ENCODE measurements at regions of chr10 and their contacts with region 1.

Region 1: DNA sequence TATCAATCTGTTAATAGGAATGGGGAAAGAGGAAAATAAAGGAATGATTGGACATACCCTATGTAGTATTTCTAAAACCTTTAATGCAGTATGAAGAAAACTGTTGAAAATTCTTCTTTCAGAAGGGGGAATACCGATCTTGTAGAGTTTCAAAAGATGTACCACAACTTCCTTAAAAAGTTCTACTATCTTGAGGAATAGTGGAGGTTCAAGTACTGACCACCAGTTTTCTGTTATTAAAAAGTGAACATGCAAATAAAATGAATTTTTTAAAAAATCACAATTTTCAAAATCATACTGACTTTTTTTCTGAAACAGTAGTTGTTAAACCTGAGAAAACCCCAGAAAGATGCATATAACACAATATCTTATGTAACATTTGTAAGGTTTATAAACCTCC is 86.5 kb downstream of the HERC4 start:
- DNase-seq: no peak
- ATAC-seq: no peak
- H3K4me3 ChIP-seq: no peak overlapping the region
- H3K4me3 Mint-ChIP-seq: no peak overlapping the region
- H3K27ac ChIP-seq: no peak overlapping the region
- H3K27ac Mint-ChIP-seq: peak overlapping the region in 2 of 9 donors; percentile 13 to 73
- H3K4me1 ChIP-seq: no peaks in the 10 kb centered on the region
- H3K4me1 Mint-ChIP-seq: peaks cover 2 to 15% (median 12%) of the 10 kb centered on the region in 7 donors
- H3K27me3 ChIP-seq: no peaks in the 10 kb centered on the region
- H3K27me3 Mint-ChIP-seq: no peaks in the 10 kb centered on the region

Region 2: DNA sequence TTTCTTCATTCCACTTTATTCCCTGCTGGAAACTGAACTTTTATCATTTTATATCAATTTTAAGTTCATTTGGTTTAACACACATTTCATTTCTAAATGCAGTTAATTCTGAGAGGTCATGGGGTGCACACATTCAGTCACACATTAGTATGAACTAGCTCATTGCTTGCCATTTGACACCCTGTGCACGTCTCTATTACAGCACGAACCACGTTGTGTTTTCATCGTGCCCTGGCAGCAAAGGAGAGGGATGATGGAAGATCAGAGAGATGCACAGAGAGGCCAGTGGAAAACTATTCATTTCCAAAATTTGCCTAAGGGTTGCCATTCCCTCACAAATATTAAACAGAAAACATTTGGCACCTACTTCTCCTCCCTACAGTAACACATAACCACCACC is 338.0 kb before region 1 on chr10:
- CTCF ChIA-PET with region 1: no interaction called
- POLR2A ChIA-PET with region 1: no interaction called
- intact Hi-C with region 1: no loop called
- DNase-seq: no peak
- ATAC-seq: no peak
- H3K4me3 ChIP-seq: no peak overlapping the region
- H3K4me3 Mint-ChIP-seq: no peak overlapping the region
- H3K27ac ChIP-seq: no peak overlapping the region
- H3K27ac Mint-ChIP-seq: no peak overlapping the region
- H3K4me1 ChIP-seq: no peaks in the 10 kb centered on the region
- H3K4me1 Mint-ChIP-seq: no peaks in the 10 kb centered on the region
- H3K27me3 ChIP-seq: no peaks in the 10 kb centered on the region
- H3K27me3 Mint-ChIP-seq: peaks cover 0 to 19% (median 5%) of the 10 kb centered on the region in 5 donors

Region 3: DNA sequence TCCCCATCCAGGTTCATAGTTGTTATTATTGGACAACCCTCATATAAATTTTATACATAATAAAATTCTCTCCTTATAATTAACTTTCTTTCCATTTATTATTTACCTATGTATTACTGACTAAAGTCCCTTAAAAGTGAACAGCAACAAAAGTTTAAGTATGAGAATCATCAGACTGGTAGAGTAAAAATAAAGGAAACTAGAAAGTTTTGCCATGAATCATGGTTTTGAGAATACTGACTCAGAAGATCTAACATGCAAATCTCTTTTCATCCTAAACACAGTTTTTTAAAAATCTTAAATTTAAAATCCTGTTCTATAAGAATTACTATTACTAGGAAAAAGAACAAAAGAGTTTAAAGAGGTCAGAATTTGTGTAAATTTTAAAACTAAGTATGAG is 54.4 kb after region 1 on chr10:
- CTCF ChIA-PET with region 1: no interaction called
- POLR2A ChIA-PET with region 1: no interaction called
- intact Hi-C with region 1: loop called in 1 of 2 experiments (anchors 5 kb)
- DNase-seq: no peak
- ATAC-seq: no peak
- H3K4me3 ChIP-seq: no peak overlapping the region
- H3K4me3 Mint-ChIP-seq: no peak overlapping the region
- H3K27ac ChIP-seq: no peak overlapping the region
- H3K27ac Mint-ChIP-seq: no peak overlapping the region
- H3K4me1 ChIP-seq: no peaks in the 10 kb centered on the region
- H3K4me1 Mint-ChIP-seq: peaks cover under 1 to 29% (median 27%) of the 10 kb centered on the region in 7 donors
- H3K27me3 ChIP-seq: no peaks in the 10 kb centered on the region
- H3K27me3 Mint-ChIP-seq: no peaks in the 10 kb centered on the region

Region 4: GRCh38 chr10:68501691-68502090 is 513.1 kb after region 1 on chr10:
- CTCF ChIA-PET with region 1: no interaction called
- POLR2A ChIA-PET with region 1: no interaction called
- intact Hi-C with region 1: no loop called
- DNase-seq: no peak
- ATAC-seq: no peak
- H3K4me3 ChIP-seq: no peak overlapping the region
- H3K4me3 Mint-ChIP-seq: peak overlapping the region in 1 of 10 donors; percentile 26
- H3K27ac ChIP-seq: no peak overlapping the region
- H3K27ac Mint-ChIP-seq: peak overlapping the region in 1 of 9 donors; percentile 50
- H3K4me1 ChIP-seq: no peaks in the 10 kb centered on the region
- H3K4me1 Mint-ChIP-seq: peaks cover 0 to 12% (median 0%) of the 10 kb centered on the region in 7 donors
- H3K27me3 ChIP-seq: no peaks in the 10 kb centered on the region
- H3K27me3 Mint-ChIP-seq: no peaks in the 10 kb centered on the region

Region 5: DNA sequence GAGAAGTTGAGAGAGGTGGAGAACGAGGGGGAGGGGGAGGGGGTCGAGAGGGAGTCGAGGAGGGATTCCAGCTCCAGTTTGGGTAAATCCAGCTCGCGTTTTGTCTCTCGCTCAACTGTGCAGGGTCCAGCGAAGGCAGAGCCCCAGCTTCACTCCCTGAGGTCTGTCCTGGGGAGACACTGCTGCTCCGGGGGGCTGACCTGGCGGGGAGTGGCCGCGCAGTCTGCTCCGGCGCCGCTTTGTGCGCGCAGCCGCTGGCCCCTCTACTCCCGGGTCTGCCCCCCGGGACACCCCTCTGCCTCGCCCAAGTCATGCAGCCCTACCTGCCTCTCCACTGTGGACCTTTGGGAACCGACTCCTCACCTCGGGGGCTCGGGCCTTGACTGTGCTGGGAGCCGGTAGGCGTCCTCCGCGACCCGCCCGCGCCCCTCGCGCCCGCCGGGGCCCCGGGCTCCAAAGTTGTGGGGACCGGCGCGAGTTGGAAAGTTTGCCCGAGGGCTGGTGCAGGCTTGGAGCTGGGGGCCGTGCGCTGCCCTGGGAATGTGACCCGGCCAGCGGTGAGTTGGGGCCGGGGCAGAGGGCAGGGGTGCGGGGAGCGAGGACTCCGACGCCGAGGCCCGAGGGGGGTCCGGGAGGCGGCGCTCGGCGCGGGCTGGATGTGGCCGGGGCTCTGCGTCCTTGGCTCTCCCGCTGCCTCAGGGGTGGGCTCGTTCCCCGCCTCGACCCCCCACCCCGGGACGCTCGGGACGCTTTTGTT is 571.8 kb after region 1 on chr10 and contains the start of gene TET1:
- CTCF ChIA-PET with region 1: no interaction called
- POLR2A ChIA-PET with region 1: no interaction called
- intact Hi-C with region 1: no loop called
- DNase-seq: peak in 6 of 9 donors; percentile 9 to 30 (median 10)
- ATAC-seq: peak; percentile 34
- H3K4me3 ChIP-seq: peak within 1 kb of the TSS; percentile 41
- H3K4me3 Mint-ChIP-seq: peak within 1 kb of the TSS; percentile 65 to 90 (median 76)
- H3K27ac ChIP-seq: no peak within 1 kb of the TSS
- H3K27ac Mint-ChIP-seq: peak within 1 kb of the TSS in 1 of 9 donors; percentile 32
- H3K4me1 ChIP-seq: peaks cover 5 to 14% of the 10 kb centered on the region in 2 donors
- H3K4me1 Mint-ChIP-seq: peaks cover 16 to 33% (median 25%) of the 10 kb centered on the region in 7 donors
- H3K27me3 ChIP-seq: peaks cover 4 to 14% of the 10 kb centered on the region in 2 donors
- H3K27me3 Mint-ChIP-seq: peaks cover 52 to 73% (median 65%) of the 10 kb centered on the region in 5 donors
- total RNA-seq, gene TET1: 2.5 to 3.0 (median 2.9) TPM

Measured in naive thymus-derived CD4-positive, alpha-beta T cell (primary cell).